ENCODE measurements at regions of chr2 and their contacts with region 1.

Region 1: GRCh38 chr2:241149925-241150659 is at the start of gene PPP1R7:
- DNase-seq: peak; percentile 94 to 97 (median 95)
- H3K4me3 ChIP-seq: peak within 1 kb of the TSS; percentile 70 to 93
- H3K4me3 Mint-ChIP-seq: peak within 1 kb of the TSS; percentile 93 to 100 (median 100)
- H3K27ac ChIP-seq: peak within 1 kb of the TSS; percentile 75
- H3K27ac Mint-ChIP-seq: peak within 1 kb of the TSS; percentile 94 to 99 (median 97)
- H3K4me1 ChIP-seq: peaks cover 26% of the 10 kb centered on the region
- H3K4me1 Mint-ChIP-seq: peaks cover 29 to 51% (median 44%) of the 10 kb centered on the region in 4 donors
- H3K27me3 ChIP-seq: no peaks in the 10 kb centered on the region
- H3K27me3 Mint-ChIP-seq: no peaks in the 10 kb centered on the region
- total RNA-seq, gene PPP1R7: 61.3 to 68.9 TPM

Region 2: GRCh38 chr2:240832205-240832727 is 317.8 kb before region 1 on chr2:
- CTCF ChIA-PET with region 1: no interaction called
- POLR2A ChIA-PET with region 1: interaction called, 4 read pairs
- intact Hi-C with region 1: loop called (anchors 1 kb)
- DNase-seq: peak; percentile 98 to 99 (median 99)
- H3K4me3 ChIP-seq: peak overlapping the region; percentile 34 to 36
- H3K4me3 Mint-ChIP-seq: peak overlapping the region in 6 of 8 donors; percentile 12 to 81 (median 66)
- H3K27ac ChIP-seq: no peak overlapping the region
- H3K27ac Mint-ChIP-seq: peak overlapping the region in 3 of 7 donors; percentile 55 to 91 (median 82)
- H3K4me1 ChIP-seq: peaks cover 12% of the 10 kb centered on the region
- H3K4me1 Mint-ChIP-seq: peaks cover 0 to 6% (median 3%) of the 10 kb centered on the region in 4 donors
- H3K27me3 ChIP-seq: peaks cover 10% of the 10 kb centered on the region
- H3K27me3 Mint-ChIP-seq: peaks cover 8 to 16% of the 10 kb centered on the region in 2 donors

Region 3: DNA sequence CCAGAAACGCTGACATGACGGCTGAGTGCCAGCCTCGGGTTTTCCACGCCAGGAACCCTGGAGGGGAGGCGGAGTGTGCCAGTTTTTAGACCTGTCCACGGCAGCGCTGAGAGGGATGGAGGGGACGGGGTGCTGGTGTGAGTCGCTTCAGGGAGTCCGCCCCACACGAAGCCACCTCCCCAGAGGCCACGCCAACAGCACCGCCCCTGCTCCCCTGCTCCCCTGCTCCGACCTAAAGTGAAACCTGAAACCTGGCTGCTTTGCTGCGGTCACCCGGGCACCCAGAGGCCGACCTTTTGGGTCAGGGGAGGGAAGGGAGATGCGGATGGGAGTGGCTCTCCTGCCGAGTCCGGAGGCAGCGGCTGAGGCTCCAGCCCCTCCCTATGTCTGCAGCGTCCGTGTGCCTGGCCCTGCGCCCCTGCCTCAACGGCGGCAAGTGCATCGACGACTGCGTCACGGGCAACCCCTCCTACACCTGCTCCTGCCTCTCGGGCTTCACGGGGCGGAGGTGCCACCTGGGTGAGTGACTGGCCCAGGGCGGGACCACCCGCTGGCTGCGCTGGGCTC is 113.6 kb before region 1 on chr2:
- CTCF ChIA-PET with region 1: no interaction called
- POLR2A ChIA-PET with region 1: no interaction called
- intact Hi-C with region 1: loop called (anchors 2 kb)
- DNase-seq: peak; percentile 63 to 94 (median 77)
- H3K4me3 ChIP-seq: peak overlapping the region; percentile 17 to 83
- H3K4me3 Mint-ChIP-seq: peak overlapping the region; percentile 75 to 91 (median 84)
- H3K27ac ChIP-seq: peak overlapping the region; percentile 68
- H3K27ac Mint-ChIP-seq: peak overlapping the region; percentile 80 to 99 (median 91)
- H3K4me1 ChIP-seq: peaks cover 32% of the 10 kb centered on the region
- H3K4me1 Mint-ChIP-seq: peaks cover 8 to 36% (median 17%) of the 10 kb centered on the region in 4 donors
- H3K27me3 ChIP-seq: no peaks in the 10 kb centered on the region
- H3K27me3 Mint-ChIP-seq: no peaks in the 10 kb centered on the region

Region 4: GRCh38 chr2:241087420-241088268 is 62.4 kb before region 1 on chr2:
- CTCF ChIA-PET with region 1: interaction called, 44 read pairs
- POLR2A ChIA-PET with region 1: interaction called, 11 read pairs
- intact Hi-C with region 1: no loop called
- DNase-seq: no peak
- H3K4me3 ChIP-seq: no peak overlapping the region
- H3K4me3 Mint-ChIP-seq: peak overlapping the region in 1 of 8 donors; percentile 0
- H3K27ac ChIP-seq: no peak overlapping the region
- H3K27ac Mint-ChIP-seq: peak overlapping the region in 2 of 7 donors; percentile 2 to 37
- H3K4me1 ChIP-seq: no peaks in the 10 kb centered on the region
- H3K4me1 Mint-ChIP-seq: peaks cover 14 to 18% (median 15%) of the 10 kb centered on the region in 4 donors
- H3K27me3 ChIP-seq: no peaks in the 10 kb centered on the region
- H3K27me3 Mint-ChIP-seq: no peaks in the 10 kb centered on the region

Region 5: DNA sequence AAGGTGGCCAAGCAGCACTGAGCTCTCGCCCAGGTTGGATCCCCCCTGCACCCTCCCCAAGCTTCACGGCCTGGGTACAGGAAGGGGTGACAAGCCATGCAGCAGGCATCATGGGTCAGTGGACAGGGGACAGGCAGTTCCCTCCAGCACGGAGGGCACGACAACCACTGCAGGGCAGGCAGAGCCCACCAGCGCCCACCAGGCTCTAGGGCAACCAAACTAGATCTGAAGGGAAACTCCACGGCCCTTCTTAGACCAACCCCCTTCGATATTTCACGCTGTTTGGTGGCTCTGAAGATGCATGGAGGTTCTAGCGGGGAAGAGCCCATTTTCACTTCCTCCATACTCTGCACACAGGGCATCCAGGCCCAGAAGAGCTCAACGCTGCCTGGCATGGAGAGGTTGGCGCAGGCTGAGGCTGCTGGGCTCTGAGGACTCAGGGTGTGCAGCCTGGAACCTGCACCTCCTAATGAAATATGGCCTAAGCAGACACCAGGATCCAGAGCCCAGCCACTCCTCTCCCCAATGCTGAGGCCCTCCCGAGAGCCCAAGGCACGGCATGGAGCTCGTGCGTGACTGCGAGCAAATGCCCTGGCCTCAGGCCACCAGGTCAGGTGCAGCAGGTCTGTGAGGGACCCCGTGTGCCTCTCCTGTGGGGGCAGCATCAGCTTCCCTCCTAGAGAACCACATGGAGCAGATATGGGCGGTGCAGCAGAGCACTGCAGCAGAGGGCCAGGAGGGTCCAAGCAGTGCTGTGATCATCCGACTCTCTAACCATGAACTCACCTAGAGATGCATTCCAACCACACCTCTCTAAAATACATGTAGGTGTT is 39.3 kb before region 1 on chr2:
- CTCF ChIA-PET with region 1: interaction called, 16 read pairs
- POLR2A ChIA-PET with region 1: interaction called, 299 read pairs
- intact Hi-C with region 1: no loop called
- DNase-seq: peak in 1 of 5 donors; percentile 33
- H3K4me3 ChIP-seq: peak overlapping the region; percentile 48 to 51
- H3K4me3 Mint-ChIP-seq: peak overlapping the region; percentile 89 to 98 (median 93)
- H3K27ac ChIP-seq: peak overlapping the region; percentile 64
- H3K27ac Mint-ChIP-seq: peak overlapping the region; percentile 93 to 99 (median 97)
- H3K4me1 ChIP-seq: peaks cover 60% of the 10 kb centered on the region
- H3K4me1 Mint-ChIP-seq: peaks cover 35 to 69% (median 53%) of the 10 kb centered on the region in 4 donors
- H3K27me3 ChIP-seq: no peaks in the 10 kb centered on the region
- H3K27me3 Mint-ChIP-seq: no peaks in the 10 kb centered on the region

Region 6: GRCh38 chr2:241508240-241509154 is 358.4 kb after region 1 on chr2 and contains the start of gene STK25:
- CTCF ChIA-PET with region 1: no interaction called
- POLR2A ChIA-PET with region 1: no interaction called
- intact Hi-C with region 1: loop called (anchors 1 kb)
- DNase-seq: peak; percentile 97 to 98 (median 98)
- H3K4me3 ChIP-seq: peak within 1 kb of the TSS; percentile 29 to 58
- H3K4me3 Mint-ChIP-seq: peak within 1 kb of the TSS; percentile 81 to 85 (median 83)
- H3K27ac ChIP-seq: peak within 1 kb of the TSS; percentile 82
- H3K27ac Mint-ChIP-seq: peak within 1 kb of the TSS; percentile 62 to 94 (median 75)
- H3K4me1 ChIP-seq: peaks cover 18% of the 10 kb centered on the region
- H3K4me1 Mint-ChIP-seq: peaks cover 11 to 41% (median 22%) of the 10 kb centered on the region in 4 donors
- H3K27me3 ChIP-seq: no peaks in the 10 kb centered on the region
- H3K27me3 Mint-ChIP-seq: no peaks in the 10 kb centered on the region
- total RNA-seq, gene STK25: 178 to 182 TPM

Measured in CD4-positive, alpha-beta memory T cell (primary cell).